A549 (cell line): ENCODE measurements at regions of chr7 and their contacts with region 1.

Region 1: GRCh38 chr7:74206589-74207120 is 3.2 kb upstream of the LAT2 start:
- DNase-seq: peak; percentile 77
- ATAC-seq: peak; percentile 79 to 81
- H3K4me3 ChIP-seq: no peak overlapping the region
- H3K27ac ChIP-seq: peak overlapping the region; percentile 54 to 70; a peak in 4 of 6 replicates
- H3K4me1 ChIP-seq: peaks cover 19% of the 10 kb centered on the region
- CTCF ChIP-seq: peak; percentile 96
- EP300 ChIP-seq: no peak
- POLR2A ChIP-seq: no peak
- RAD21 ChIP-seq: peak; percentile 91 to 95

Region 2: GRCh38 chr7:74068393-74069085 is 138.1 kb before region 1 on chr7:
- CTCF ChIA-PET with region 1: interaction called, 16 read pairs
- POLR2A ChIA-PET with region 1: no interaction called
- DNase-seq: no peak
- ATAC-seq: no peak
- H3K4me3 ChIP-seq: no peak overlapping the region
- H3K27ac ChIP-seq: no peak overlapping the region
- H3K4me1 ChIP-seq: no peaks in the 10 kb centered on the region
- CTCF ChIP-seq: no peak
- EP300 ChIP-seq: no peak
- POLR2A ChIP-seq: no peak
- RAD21 ChIP-seq: no peak

Region 3: DNA sequence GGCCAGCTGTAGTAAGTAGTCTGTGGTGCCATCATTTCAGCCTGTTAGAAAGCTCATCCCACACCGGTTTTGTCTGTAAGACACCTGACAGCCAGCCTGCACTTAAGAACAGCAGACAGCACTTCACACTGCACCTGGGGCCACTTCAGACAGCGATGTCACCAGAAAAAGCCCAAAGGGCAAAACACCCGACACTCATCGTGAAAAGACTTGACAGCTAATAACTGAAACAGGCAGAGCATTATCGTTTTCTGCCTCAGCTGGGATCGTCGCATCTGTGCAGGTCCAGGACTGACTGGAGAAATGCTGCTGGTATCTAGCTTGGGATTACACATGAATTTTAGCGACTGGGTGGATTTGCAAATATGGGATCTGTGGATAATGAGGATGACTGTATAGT is 13.6 kb before region 1 on chr7:
- CTCF ChIA-PET with region 1: interaction called, 50 read pairs
- POLR2A ChIA-PET with region 1: interaction called, 4 read pairs
- DNase-seq: no peak
- ATAC-seq: no peak
- H3K4me3 ChIP-seq: no peak overlapping the region
- H3K27ac ChIP-seq: no peak overlapping the region
- H3K4me1 ChIP-seq: peaks cover 3% of the 10 kb centered on the region
- CTCF ChIP-seq: no peak
- EP300 ChIP-seq: no peak
- POLR2A ChIP-seq: no peak
- RAD21 ChIP-seq: no peak

Region 4: GRCh38 chr7:74240482-74240881 is 33.8 kb after region 1 on chr7:
- CTCF ChIA-PET with region 1: interaction called, 23 read pairs
- POLR2A ChIA-PET with region 1: interaction called, 3 read pairs
- DNase-seq: no peak
- ATAC-seq: no peak
- H3K4me3 ChIP-seq: no peak overlapping the region
- H3K27ac ChIP-seq: no peak overlapping the region
- H3K4me1 ChIP-seq: no peaks in the 10 kb centered on the region
- CTCF ChIP-seq: no peak
- EP300 ChIP-seq: no peak
- POLR2A ChIP-seq: no peak
- RAD21 ChIP-seq: no peak

Region 5: DNA sequence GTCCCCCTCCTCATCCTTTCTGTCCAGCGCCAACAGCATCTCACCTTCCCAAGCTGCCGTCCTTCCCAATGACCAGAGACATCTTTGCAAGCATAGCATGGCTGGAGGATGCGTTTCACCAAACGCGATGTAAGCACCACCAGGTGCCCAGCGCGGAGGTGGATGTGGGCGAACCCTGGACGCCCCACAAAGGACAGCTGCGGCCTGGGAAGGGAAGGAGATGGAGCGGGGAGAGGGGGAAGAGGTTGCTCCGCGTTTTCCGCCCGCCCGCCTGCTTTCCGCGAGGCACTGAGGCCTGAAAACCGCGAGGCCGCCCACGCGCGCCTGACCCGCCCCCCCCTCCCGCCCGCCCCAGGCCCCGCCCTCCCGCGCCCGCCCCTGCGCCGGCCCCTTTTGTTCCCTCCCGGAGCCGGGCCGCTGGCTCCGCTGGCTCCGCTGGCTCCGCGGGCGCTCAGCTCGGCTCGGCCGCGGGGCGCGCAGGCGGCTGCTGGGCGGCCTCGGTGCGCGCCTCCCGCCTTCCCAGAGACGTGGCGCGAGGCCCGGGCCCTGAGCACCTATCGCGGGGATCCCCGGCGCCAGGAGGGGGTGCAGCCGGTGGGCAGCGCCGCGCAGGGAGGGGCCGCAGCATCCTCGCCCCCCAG is 82.5 kb after region 1 on chr7 and contains the start of gene CLIP2:
- CTCF ChIA-PET with region 1: interaction called, 55 read pairs
- POLR2A ChIA-PET with region 1: interaction called, 4 read pairs
- DNase-seq: peak; percentile 64 to 83
- ATAC-seq: peak; percentile 73 to 77
- H3K4me3 ChIP-seq: peak within 1 kb of the TSS; percentile 88
- H3K27ac ChIP-seq: peak within 1 kb of the TSS; percentile 89 to 97
- H3K4me1 ChIP-seq: peaks cover 61% of the 10 kb centered on the region
- CTCF ChIP-seq: no peak
- EP300 ChIP-seq: no peak
- POLR2A ChIP-seq: peak; percentile 71
- RAD21 ChIP-seq: peak in 1 of 2 experiments; percentile 48; a peak in 3 of 5 replicates
- polyA plus RNA-seq, gene CLIP2: 3.7 and 5.7 TPM in 2 replicates

Region 6: GRCh38 chr7:74709880-74710671 is 503.4 kb after region 1 on chr7:
- CTCF ChIA-PET with region 1: no interaction called
- POLR2A ChIA-PET with region 1: no interaction called
- DNase-seq: peak in 1 of 2 experiments; percentile 38
- ATAC-seq: peak; percentile 68 to 80
- H3K4me3 ChIP-seq: no peak overlapping the region
- H3K27ac ChIP-seq: no peak overlapping the region
- H3K4me1 ChIP-seq: peaks cover 7% of the 10 kb centered on the region; the same call in 1 of the 3 replicates
- CTCF ChIP-seq: no peak; the same call in 2 of the 3 replicates
- EP300 ChIP-seq: no peak
- POLR2A ChIP-seq: no peak
- RAD21 ChIP-seq: peak; percentile 29 to 33; a peak in 4 of 5 replicates